Caco-2 (cell line): ENCODE measurements at regions of chr1 and their contacts with region 1.

Region 1: GRCh38 chr1:234610348-234611152 is 572 bp upstream of the IRF2BP2 start:
- DNase-seq: peak; percentile 95 to 97
- H3K4me3 ChIP-seq: peak overlapping the region; percentile 82
- H3K4me3 Mint-ChIP-seq: peak overlapping the region; percentile 92
- H3K27ac Mint-ChIP-seq: peak overlapping the region; percentile 98
- H3K4me1 ChIP-seq: peaks cover 23% of the 10 kb centered on the region
- H3K4me1 Mint-ChIP-seq: peaks cover 40% of the 10 kb centered on the region
- H3K27me3 ChIP-seq: no peaks in the 10 kb centered on the region
- H3K27me3 Mint-ChIP-seq: no peaks in the 10 kb centered on the region
- CTCF ChIP-seq: peak in 1 of 2 experiments; percentile 3

Region 2: GRCh38 chr1:234433563-234434285 is 176.8 kb before region 1 on chr1:
- CTCF ChIA-PET with region 1: no interaction called
- POLR2A ChIA-PET with region 1: no interaction called
- intact Hi-C with region 1: no loop called
- DNase-seq: no peak
- H3K4me3 ChIP-seq: no peak overlapping the region
- H3K4me3 Mint-ChIP-seq: no peak overlapping the region
- H3K27ac Mint-ChIP-seq: no peak overlapping the region
- H3K4me1 ChIP-seq: no peaks in the 10 kb centered on the region
- H3K4me1 Mint-ChIP-seq: no peaks in the 10 kb centered on the region
- H3K27me3 ChIP-seq: no peaks in the 10 kb centered on the region
- H3K27me3 Mint-ChIP-seq: no peaks in the 10 kb centered on the region
- CTCF ChIP-seq: no peak

Region 3: GRCh38 chr1:234599617-234600417 is 10.7 kb before region 1 on chr1:
- CTCF ChIA-PET with region 1: interaction called, 4 read pairs
- POLR2A ChIA-PET with region 1: interaction called, 61 read pairs
- intact Hi-C with region 1: no loop called
- DNase-seq: peak; percentile 92 to 93
- H3K4me3 ChIP-seq: peak overlapping the region; percentile 59
- H3K4me3 Mint-ChIP-seq: peak overlapping the region; percentile 89
- H3K27ac Mint-ChIP-seq: peak overlapping the region; percentile 92
- H3K4me1 ChIP-seq: peaks cover 57% of the 10 kb centered on the region
- H3K4me1 Mint-ChIP-seq: peaks cover 23% of the 10 kb centered on the region
- H3K27me3 ChIP-seq: no peaks in the 10 kb centered on the region
- H3K27me3 Mint-ChIP-seq: no peaks in the 10 kb centered on the region
- CTCF ChIP-seq: no peak

Region 4: DNA sequence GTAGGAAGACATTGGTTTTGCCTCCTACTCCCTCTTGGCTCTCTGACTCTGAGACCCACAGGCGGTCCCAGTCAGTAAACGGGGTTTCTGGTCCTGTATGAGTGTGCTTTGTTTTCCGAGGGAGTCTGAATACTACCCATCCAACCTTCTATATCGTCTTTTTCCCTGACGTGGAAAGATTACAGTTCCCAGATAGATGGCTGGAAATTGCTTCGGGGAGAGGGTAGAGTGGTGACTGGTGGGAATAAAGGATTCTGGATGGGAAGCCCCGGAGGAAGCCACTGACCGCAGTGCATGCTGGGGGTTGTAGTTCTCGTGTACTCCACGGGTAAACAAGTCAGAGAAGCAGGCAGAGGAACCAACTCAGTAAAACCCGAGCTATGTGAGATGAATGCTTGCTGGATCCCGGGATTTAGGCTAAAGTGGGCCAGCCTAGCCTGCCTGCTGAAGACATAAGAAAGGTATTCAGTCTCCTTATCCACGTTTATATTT is 65.6 kb after region 1 on chr1:
- CTCF ChIA-PET with region 1: no interaction called
- POLR2A ChIA-PET with region 1: interaction called, 7 read pairs
- intact Hi-C with region 1: loop called (anchors 5 kb)
- DNase-seq: peak; percentile 80 to 87
- H3K4me3 ChIP-seq: peak overlapping the region; percentile 36
- H3K4me3 Mint-ChIP-seq: peak overlapping the region; percentile 69
- H3K27ac Mint-ChIP-seq: no peak overlapping the region
- H3K4me1 ChIP-seq: peaks cover 16% of the 10 kb centered on the region
- H3K4me1 Mint-ChIP-seq: peaks cover 20% of the 10 kb centered on the region
- H3K27me3 ChIP-seq: no peaks in the 10 kb centered on the region
- H3K27me3 Mint-ChIP-seq: no peaks in the 10 kb centered on the region
- CTCF ChIP-seq: no peak

Region 5: GRCh38 chr1:234772345-234773147 is 162.0 kb after region 1 on chr1:
- CTCF ChIA-PET with region 1: no interaction called
- POLR2A ChIA-PET with region 1: interaction called, 9 read pairs
- intact Hi-C with region 1: loop called (anchors 5 kb)
- DNase-seq: peak; percentile 87 to 95
- H3K4me3 ChIP-seq: no peak overlapping the region
- H3K4me3 Mint-ChIP-seq: peak overlapping the region; percentile 58
- H3K27ac Mint-ChIP-seq: peak overlapping the region; percentile 90
- H3K4me1 ChIP-seq: peaks cover 53% of the 10 kb centered on the region
- H3K4me1 Mint-ChIP-seq: peaks cover 51% of the 10 kb centered on the region
- H3K27me3 ChIP-seq: no peaks in the 10 kb centered on the region
- H3K27me3 Mint-ChIP-seq: no peaks in the 10 kb centered on the region
- CTCF ChIP-seq: no peak

Region 6: DNA sequence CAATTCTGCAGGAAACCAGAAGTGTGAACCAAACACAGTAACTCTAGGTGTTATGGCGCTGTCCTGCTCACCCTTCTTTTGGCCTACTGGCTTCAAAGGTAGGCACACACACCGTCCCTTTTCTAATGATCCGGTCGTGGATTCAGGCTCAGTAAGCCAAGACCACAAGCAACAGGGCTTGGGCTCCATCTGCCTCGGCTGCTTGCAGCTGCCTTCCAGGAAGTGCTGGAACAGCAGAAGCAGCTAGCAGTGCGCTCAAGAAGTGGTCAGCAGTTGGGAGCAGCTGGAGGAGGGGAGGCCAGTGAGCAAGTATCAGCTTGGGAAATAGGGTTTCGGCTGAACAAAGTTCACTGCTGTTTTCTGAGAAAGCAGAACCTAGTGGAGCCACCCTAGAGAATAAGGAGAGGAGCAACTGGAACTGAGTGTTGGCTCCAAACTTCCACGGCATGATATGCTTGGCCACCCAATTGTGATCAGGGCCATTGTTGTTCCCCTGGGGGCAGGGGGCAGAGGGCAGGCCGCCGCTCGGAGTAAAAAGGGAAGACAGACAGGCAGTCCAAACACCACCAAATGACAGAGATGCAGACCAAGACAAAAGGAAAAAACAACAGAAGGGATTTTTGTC is 344.7 kb after region 1 on chr1:
- CTCF ChIA-PET with region 1: interaction called, 7 read pairs
- POLR2A ChIA-PET with region 1: interaction called, 24 read pairs
- intact Hi-C with region 1: no loop called
- DNase-seq: peak; percentile 82 to 93
- H3K4me3 ChIP-seq: no peak overlapping the region
- H3K4me3 Mint-ChIP-seq: peak overlapping the region; percentile 64
- H3K27ac Mint-ChIP-seq: peak overlapping the region; percentile 99
- H3K4me1 ChIP-seq: peaks cover 69% of the 10 kb centered on the region
- H3K4me1 Mint-ChIP-seq: peaks cover 50% of the 10 kb centered on the region
- H3K27me3 ChIP-seq: no peaks in the 10 kb centered on the region
- H3K27me3 Mint-ChIP-seq: no peaks in the 10 kb centered on the region
- CTCF ChIP-seq: peak in 1 of 2 experiments; percentile 20

Region 7: GRCh38 chr1:235060607-235061470 is 450.3 kb after region 1 on chr1:
- CTCF ChIA-PET with region 1: no interaction called
- POLR2A ChIA-PET with region 1: interaction called, 15 read pairs
- intact Hi-C with region 1: no loop called
- DNase-seq: peak; percentile 78 to 88
- H3K4me3 ChIP-seq: no peak overlapping the region
- H3K4me3 Mint-ChIP-seq: peak overlapping the region; percentile 51
- H3K27ac Mint-ChIP-seq: peak overlapping the region; percentile 95
- H3K4me1 ChIP-seq: peaks cover 41% of the 10 kb centered on the region
- H3K4me1 Mint-ChIP-seq: peaks cover 51% of the 10 kb centered on the region
- H3K27me3 ChIP-seq: no peaks in the 10 kb centered on the region
- H3K27me3 Mint-ChIP-seq: no peaks in the 10 kb centered on the region
- CTCF ChIP-seq: no peak